Heart right ventricle (tissue), 16 donors: ENCODE measurements at regions of chr19 and their contacts with region 1.

Region 1: GRCh38 chr19:49327878-49328544 is 3.0 kb upstream of the SLC6A16 start:
- DNase-seq: no peak
- ATAC-seq: peak in 1 of 8 donors; percentile 20
- H3K4me3 ChIP-seq: no peak overlapping the region
- H3K27ac ChIP-seq: no peak overlapping the region
- H3K4me1 ChIP-seq: peaks cover 0 to 18% (median 0%) of the 10 kb centered on the region in 9 donors
- H3K27me3 ChIP-seq: no peaks in the 10 kb centered on the region
- CTCF ChIP-seq: peak; percentile 26 to 79 (median 61)

Region 2: DNA sequence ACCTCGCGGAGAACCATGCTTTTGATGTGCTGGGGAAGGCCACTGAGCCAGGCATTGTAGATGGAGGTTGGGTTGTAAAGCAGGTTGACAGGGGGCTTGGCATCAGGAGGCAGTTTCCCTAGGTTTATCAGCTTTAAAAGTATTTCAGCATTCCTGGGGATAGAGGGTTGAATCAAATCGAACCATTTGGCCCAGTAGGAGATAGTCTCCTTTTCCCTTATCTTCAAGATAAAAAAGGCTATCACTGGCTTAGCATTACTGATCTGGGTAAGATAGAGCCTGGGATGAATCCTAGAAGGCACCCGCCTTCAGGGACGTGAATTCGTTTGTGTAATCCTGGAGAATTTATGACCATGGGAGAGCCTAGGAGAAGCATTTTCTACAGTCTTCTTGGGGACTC is 33.6 kb before region 1 on chr19:
- intact Hi-C with region 1: loop called in 1 of 10 experiments (anchors 2 kb)
- DNase-seq: no peak
- ATAC-seq: no peak
- H3K4me3 ChIP-seq: no peak overlapping the region
- H3K27ac ChIP-seq: no peak overlapping the region
- H3K4me1 ChIP-seq: no peaks in the 10 kb centered on the region
- H3K27me3 ChIP-seq: no peaks in the 10 kb centered on the region
- CTCF ChIP-seq: no peak